Psoas muscle (tissue), 8 donors: ENCODE measurements at regions of chr20 and their contacts with region 1.

Region 1: GRCh38 chr20:19026121-19026878 is 186.1 kb upstream of the SLC24A3 start:
- DNase-seq: no peak
- ATAC-seq: peak; percentile 76 to 93 (median 82)
- H3K4me3 ChIP-seq: no peak overlapping the region
- H3K27ac ChIP-seq: no peak overlapping the region
- H3K4me1 ChIP-seq: peaks cover 7% of the 10 kb centered on the region
- H3K27me3 ChIP-seq: no peaks in the 10 kb centered on the region
- CTCF ChIP-seq: no peak

Region 2: GRCh38 chr20:19079536-19080299 is 53.4 kb after region 1 on chr20:
- intact Hi-C with region 1: loop called in 1 of 2 experiments (anchors 10 kb)
- DNase-seq: no peak
- ATAC-seq: no peak
- H3K4me3 ChIP-seq: no peak overlapping the region
- H3K27ac ChIP-seq: no peak overlapping the region
- H3K4me1 ChIP-seq: no peaks in the 10 kb centered on the region
- H3K27me3 ChIP-seq: no peaks in the 10 kb centered on the region
- CTCF ChIP-seq: no peak